ENCODE measurements at regions of chr2 and their contacts with region 1.

Region 1: DNA sequence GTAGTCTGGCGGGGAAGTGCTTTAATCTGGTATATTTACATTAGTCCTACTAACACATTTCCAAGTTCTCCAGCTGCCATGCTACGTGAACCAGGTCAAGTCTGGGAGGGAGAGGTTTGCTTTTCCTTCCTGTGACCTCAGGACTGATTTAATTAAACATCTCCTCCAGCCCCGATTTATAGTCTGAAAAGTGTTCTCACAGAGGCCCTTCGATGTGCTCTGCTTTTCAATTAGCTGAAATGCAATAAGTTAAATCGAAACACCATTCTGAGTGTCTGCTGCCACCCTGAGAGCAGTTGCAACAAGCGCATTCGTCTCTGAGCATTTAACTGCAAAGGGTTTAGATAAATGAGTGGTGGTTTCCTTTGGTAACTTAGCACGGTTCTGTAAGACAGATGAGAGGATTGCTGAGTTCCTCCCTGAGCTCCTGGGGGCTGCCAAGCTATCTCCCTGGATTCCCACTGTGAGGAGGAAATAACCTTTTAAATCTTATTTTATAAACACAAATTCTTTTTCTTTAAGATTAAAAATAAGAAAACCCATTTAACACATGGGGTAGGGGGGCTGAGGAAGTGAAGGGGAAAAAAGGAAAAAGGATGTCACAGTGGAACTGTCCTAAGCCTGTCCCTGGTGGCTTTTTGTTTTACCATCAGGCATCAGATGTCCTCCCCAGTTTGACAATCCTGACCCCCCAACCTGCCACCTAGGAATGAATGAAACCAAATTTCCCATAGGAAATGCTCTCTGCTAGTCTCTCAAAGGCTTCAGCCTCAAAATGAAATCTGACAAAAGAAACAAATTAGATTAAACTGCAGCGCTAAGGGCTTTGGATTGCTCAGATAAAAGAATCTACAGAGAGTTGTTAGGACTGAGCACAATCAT is 56.5 kb upstream of the CREB1 start:
- DNase-seq: peak; percentile 34 to 80 (median 66)
- H3K4me3 ChIP-seq: peak overlapping the region in 51 of 59 donors; percentile 1 to 57 (median 32)
- H3K27ac ChIP-seq: peak overlapping the region in 52 of 59 donors; percentile 0 to 86 (median 63)
- H3K27me3 ChIP-seq: no peaks in the 10 kb centered on the region
- CTCF ChIP-seq: peak; percentile 41 to 85 (median 76)

Region 2: GRCh38 chr2:206693399-206694137 is 779.7 kb before region 1 on chr2:
- intact Hi-C with region 1: loop called in 1 of 2 experiments (anchors 10 kb)
- DNase-seq: peak in 1 of 10 donors; percentile 36
- H3K4me3 ChIP-seq: no peak overlapping the region
- H3K27ac ChIP-seq: no peak overlapping the region
- H3K27me3 ChIP-seq: peaks cover 0 to 3% (median 0%) of the 10 kb centered on the region in 45 donors
- CTCF ChIP-seq: peak; percentile 59 to 88 (median 73)

Region 3: DNA sequence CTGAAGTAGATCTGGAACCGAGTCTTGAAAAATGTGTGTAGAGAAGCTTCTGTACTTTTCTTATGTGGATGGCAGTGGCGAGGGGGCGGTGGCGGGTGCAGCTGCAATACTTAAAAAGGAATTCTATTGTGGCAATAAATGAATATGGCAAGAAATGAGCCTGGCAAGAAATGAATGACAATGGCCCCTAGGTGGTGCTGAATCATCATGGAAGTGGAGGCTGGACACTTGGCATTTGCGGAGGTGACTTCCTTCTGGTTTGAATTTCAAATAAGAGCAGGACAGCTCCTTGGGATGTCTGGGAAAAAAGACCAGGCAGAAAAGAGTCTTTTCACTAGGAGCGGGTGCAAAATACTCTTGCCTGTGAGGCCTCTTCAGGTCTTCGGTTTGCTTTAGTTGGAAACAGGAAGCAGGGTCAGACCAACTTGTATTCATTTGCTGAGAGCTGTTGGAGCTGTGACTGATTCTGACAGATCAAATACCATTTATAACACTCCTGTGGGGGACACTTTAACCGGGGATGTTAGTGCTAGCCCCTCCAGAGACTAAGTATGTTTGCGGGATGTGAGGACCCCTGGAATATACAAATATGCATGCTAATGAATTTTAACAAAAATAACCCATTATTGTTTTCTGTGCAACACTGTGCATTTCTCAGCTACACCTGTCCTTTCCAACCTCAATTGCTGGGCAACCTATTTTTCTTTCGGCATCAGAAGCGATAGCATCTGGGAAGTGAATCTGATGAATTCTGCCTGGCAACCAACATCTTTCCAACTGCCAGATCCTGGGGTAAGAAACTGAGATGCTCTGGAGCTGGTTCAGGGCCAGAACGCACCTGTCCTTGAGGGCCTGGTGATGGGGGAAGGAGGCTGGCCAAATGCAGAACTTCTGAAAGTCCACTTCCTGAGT is 672.5 kb before region 1 on chr2:
- intact Hi-C with region 1: loop called (anchors 1 kb)
- DNase-seq: peak; percentile 42 to 86 (median 72)
- H3K4me3 ChIP-seq: peak overlapping the region in 33 of 59 donors; percentile 4 to 50 (median 28)
- H3K27ac ChIP-seq: peak overlapping the region in 20 of 59 donors; percentile 3 to 66 (median 43)
- H3K27me3 ChIP-seq: no peaks in the 10 kb centered on the region
- CTCF ChIP-seq: peak; percentile 63 to 90 (median 76)

Region 4: GRCh38 chr2:207041279-207041678 is 432.0 kb before region 1 on chr2:
- intact Hi-C with region 1: loop called (anchors 5 to 10 kb)
- DNase-seq: no peak
- H3K4me3 ChIP-seq: peak overlapping the region; percentile 2 to 71 (median 48)
- H3K27ac ChIP-seq: peak overlapping the region; percentile 6 to 90 (median 79)
- H3K27me3 ChIP-seq: no peaks in the 10 kb centered on the region
- CTCF ChIP-seq: no peak

Region 5: GRCh38 chr2:207046724-207047123 is 426.6 kb before region 1 on chr2:
- intact Hi-C with region 1: loop called (anchors 5 to 10 kb)
- DNase-seq: peak in 2 of 10 donors; percentile 15 to 35
- H3K4me3 ChIP-seq: peak overlapping the region in 2 of 59 donors; percentile 11 to 13
- H3K27ac ChIP-seq: peak overlapping the region in 31 of 59 donors; percentile 3 to 65 (median 49)
- H3K27me3 ChIP-seq: no peaks in the 10 kb centered on the region
- CTCF ChIP-seq: peak in 48 of 56 donors; percentile 12 to 73 (median 42)

Region 6: DNA sequence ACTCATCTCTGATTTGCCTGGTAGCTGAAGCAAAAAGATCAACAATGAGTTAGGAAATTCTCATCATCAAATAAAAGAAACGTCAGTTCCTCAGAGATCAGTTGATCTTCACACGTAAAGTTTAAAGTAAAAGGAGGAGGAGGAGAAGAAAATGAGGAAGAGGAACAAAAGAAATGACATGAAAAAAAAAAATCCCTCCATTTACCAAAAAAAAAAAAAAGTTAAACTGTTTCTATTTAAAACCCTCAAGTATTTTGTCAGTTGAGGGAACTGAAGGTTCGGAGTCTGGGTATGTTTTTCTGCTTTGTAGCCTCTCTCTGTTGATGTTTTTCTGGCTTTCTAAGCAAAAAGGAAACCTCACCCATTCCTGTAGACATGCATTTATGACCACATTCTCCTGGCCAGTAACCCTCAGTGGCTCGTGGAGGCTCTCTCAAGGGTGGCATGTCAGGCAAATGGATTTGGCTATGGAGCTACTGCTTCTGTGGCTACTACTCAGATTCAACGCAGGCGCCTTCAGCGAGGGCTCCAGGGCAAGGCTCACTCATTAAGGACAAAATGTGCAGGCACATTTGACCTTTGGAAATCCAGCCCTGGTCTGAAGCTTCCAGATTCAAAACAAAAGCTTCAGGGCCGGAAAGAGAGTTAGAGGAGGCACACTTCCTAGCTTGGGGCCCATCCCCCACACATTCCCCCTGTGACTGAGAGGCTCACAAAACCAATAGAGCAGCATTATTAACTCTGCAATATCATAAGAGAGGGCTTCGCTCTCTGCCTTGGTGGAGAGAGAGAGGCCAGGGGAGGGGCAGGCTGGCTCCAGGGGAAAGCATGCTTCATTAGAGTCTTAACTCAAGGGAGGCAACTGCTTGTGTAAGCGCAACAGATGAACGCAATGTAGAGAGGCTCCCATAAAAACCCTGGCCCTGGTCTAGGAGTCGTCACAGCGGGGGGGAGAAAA is 329.8 kb before region 1 on chr2:
- intact Hi-C with region 1: loop called in 1 of 2 experiments (anchors 5 kb)
- DNase-seq: peak in 5 of 10 donors; percentile 34 to 47 (median 39)
- H3K4me3 ChIP-seq: peak overlapping the region in 51 of 59 donors; percentile 0 to 56 (median 31)
- H3K27ac ChIP-seq: peak overlapping the region; percentile 52 to 95 (median 89)
- H3K27me3 ChIP-seq: no peaks in the 10 kb centered on the region
- CTCF ChIP-seq: no peak

Region 7: DNA sequence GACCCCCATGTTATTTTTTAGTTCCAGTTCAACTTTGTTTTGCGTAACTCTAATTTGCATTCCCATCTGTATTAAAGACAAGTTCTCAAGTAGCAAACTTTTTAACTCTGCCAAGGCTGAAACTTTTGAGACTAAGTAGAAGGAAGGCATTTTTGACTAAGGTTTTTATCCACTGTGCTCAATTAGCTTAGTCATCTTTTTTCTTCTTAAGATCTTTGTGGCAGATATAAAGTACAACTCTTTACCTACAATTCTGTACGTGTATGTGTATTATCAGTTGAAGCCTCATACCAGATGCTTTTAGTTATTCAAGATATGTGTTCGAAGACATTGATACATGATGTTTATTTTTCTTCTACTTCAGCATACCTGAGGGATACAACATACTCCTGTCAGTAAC is 98.1 kb after region 1 on chr2:
- intact Hi-C with region 1: no loop called
- DNase-seq: no peak
- H3K4me3 ChIP-seq: no peak overlapping the region
- H3K27ac ChIP-seq: peak overlapping the region in 1 of 59 donors; percentile 16
- H3K27me3 ChIP-seq: no peaks in the 10 kb centered on the region
- CTCF ChIP-seq: no peak

Region 8: DNA sequence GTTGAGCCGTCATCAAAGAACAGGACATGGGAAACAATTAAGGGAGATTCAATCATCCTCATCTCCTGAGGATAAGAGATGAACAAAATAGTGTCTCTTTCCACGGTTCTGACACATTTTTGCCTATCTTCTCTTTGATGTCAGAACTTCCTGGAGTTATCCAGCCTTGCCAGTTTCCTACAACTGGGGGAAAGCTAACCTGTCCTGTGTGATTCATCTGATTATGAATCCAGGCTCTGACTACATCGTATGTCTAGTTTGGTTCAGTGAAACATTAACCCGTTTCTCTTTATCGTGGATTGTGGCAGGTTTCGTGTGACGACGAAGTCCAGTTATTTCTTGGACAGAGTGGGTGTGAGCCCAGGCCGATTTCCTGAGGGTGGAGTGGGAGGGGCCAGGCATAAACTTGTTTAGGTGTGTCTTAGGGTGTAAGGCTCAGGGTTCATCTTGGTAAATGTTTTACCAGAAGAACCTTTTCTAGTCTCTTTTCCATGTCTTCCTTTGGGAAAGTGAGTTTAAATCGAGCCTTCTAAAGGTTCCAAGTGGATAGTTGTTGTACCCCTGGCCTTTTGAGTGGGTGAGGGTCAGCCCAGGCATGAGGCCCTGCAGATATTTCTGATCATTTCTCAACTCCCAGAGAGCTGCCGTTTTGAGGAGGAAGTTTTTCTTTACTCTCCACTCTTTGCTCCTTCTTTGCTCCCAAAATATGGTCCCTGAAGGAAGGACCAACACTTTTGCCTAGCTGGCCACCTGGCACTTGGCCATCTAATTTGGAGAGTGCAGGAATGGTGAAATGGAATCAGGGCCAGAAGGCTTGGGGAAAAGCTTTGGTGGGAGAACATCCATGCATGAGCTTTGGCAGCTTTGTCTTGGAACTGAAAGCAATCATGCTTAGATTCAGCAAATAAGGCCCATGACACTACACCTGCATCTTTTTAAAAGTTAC is 346.8 kb after region 1 on chr2:
- intact Hi-C with region 1: no loop called
- DNase-seq: peak in 1 of 10 donors; percentile 35
- H3K4me3 ChIP-seq: no peak overlapping the region
- H3K27ac ChIP-seq: peak overlapping the region in 26 of 59 donors; percentile 0 to 74 (median 38)
- H3K27me3 ChIP-seq: no peaks in the 10 kb centered on the region
- CTCF ChIP-seq: no peak